Caco-2 (cell line): ENCODE measurements at regions of chr11 and their contacts with region 1.

Region 1: GRCh38 chr11:92269021-92269420 is 44.4 kb downstream of the FAT3 start:
- DNase-seq: peak; percentile 62 to 67
- H3K4me3 ChIP-seq: no peak overlapping the region
- H3K4me3 Mint-ChIP-seq: no peak overlapping the region
- H3K27ac Mint-ChIP-seq: peak overlapping the region; percentile 70
- H3K4me1 ChIP-seq: peaks cover 43% of the 10 kb centered on the region
- H3K4me1 Mint-ChIP-seq: peaks cover 63% of the 10 kb centered on the region
- H3K27me3 ChIP-seq: no peaks in the 10 kb centered on the region
- H3K27me3 Mint-ChIP-seq: no peaks in the 10 kb centered on the region
- CTCF ChIP-seq: no peak

Region 2: DNA sequence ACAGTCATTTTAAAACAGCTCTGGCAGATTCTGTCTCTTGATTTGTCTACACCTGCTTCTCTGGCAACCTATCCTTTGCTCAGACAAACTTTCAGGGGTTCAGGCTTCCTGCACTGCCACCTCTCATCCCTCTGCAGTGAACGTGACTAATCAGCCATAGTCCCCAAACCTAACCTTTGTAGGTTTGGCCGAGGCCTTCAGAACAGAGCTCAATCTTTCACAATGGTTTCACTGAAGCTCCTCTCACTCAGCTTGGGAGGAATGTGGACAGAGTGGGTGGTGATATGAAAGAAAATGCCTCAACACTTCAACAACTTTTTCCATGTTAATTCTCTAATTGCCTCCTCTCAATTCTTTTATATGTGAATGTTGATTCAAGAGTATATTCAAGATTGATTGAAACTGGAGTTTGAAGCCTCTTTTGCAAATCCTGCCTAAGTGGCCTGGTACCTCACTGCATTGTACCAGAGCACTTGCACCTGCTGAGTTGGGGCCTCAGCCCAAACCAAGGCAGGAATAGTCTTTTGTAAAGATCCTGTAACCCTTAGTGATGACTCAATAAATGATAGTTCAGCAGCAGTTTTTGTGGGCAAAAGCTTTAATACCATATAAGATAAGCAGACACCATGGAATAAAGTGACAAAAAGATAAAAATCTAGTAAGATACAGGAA is 78.3 kb before region 1 on chr11:
- CTCF ChIA-PET with region 1: no interaction called
- POLR2A ChIA-PET with region 1: no interaction called
- intact Hi-C with region 1: no loop called
- DNase-seq: no peak
- H3K4me3 ChIP-seq: no peak overlapping the region
- H3K4me3 Mint-ChIP-seq: no peak overlapping the region
- H3K27ac Mint-ChIP-seq: no peak overlapping the region
- H3K4me1 ChIP-seq: no peaks in the 10 kb centered on the region
- H3K4me1 Mint-ChIP-seq: no peaks in the 10 kb centered on the region
- H3K27me3 ChIP-seq: no peaks in the 10 kb centered on the region
- H3K27me3 Mint-ChIP-seq: peaks cover 3% of the 10 kb centered on the region
- CTCF ChIP-seq: no peak

Region 3: DNA sequence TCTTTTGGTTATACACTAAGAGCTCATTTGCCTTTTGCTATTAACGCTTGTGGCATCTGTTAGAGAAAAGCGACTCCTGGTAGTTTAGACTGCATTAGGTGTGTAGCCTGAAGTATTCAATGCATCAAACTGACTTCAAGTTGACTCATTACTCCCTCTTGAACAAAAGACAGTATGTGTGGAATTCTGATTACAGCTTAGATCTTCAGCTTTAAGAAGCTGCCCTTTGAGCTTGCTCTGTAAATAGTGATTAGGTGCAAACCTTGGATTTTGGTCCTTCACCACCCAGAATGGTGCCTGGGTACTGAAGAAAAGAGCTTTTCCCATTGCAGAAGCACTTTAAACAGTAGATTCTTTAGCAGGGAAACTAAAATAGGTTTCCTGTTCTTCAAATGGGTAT is 17.7 kb after region 1 on chr11:
- CTCF ChIA-PET with region 1: interaction called, 12 read pairs
- POLR2A ChIA-PET with region 1: interaction called, 17 read pairs
- intact Hi-C with region 1: loop called (anchors 1 kb)
- DNase-seq: peak; percentile 51 to 69
- H3K4me3 ChIP-seq: no peak overlapping the region
- H3K4me3 Mint-ChIP-seq: peak overlapping the region; percentile 50
- H3K27ac Mint-ChIP-seq: peak overlapping the region; percentile 80
- H3K4me1 ChIP-seq: peaks cover 61% of the 10 kb centered on the region
- H3K4me1 Mint-ChIP-seq: peaks cover 68% of the 10 kb centered on the region
- H3K27me3 ChIP-seq: no peaks in the 10 kb centered on the region
- H3K27me3 Mint-ChIP-seq: no peaks in the 10 kb centered on the region
- CTCF ChIP-seq: no peak

Region 4: GRCh38 chr11:92329646-92330045 is 60.6 kb after region 1 on chr11:
- CTCF ChIA-PET with region 1: no interaction called
- POLR2A ChIA-PET with region 1: interaction called, 7 read pairs
- intact Hi-C with region 1: loop called (anchors 5 kb)
- DNase-seq: peak in 1 of 2 experiments; percentile 14
- H3K4me3 ChIP-seq: no peak overlapping the region
- H3K4me3 Mint-ChIP-seq: no peak overlapping the region
- H3K27ac Mint-ChIP-seq: peak overlapping the region; percentile 23
- H3K4me1 ChIP-seq: peaks cover 29% of the 10 kb centered on the region
- H3K4me1 Mint-ChIP-seq: peaks cover 40% of the 10 kb centered on the region
- H3K27me3 ChIP-seq: no peaks in the 10 kb centered on the region
- H3K27me3 Mint-ChIP-seq: no peaks in the 10 kb centered on the region
- CTCF ChIP-seq: no peak

Region 5: DNA sequence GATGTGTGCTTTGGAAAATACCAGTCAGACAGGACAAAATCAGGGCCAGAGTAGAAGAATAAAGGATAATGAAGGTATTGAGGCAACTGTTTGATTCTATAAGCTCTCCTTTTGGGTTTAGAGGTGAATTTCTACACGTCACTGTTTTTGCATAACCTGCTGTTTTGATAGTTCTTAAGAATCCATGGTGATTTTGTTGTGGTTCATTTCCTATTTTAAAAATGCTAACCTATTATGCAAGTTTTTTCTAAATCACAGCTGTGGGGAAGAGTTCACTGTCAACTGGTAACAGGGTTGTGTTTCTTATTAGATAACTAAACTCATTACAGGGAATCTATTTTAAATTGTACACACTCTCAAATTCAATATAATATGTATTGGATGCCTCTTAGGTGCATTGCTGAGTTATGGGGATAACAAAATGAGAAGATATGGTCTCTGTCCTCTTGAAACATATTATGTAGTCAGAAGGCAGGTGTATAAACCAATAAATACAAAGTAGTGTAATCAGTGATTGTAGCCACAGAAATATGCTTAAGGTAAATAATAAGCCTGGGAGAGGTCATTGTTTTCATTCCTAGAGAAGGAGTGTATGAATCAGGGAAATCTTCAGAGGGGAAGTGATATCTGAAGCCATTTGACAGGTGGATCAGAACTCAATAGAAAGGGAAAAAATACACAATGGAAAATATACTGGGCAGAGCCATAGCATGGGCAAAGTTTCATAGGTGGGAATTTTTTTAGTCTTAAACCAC is 148.1 kb after region 1 on chr11:
- CTCF ChIA-PET with region 1: no interaction called
- POLR2A ChIA-PET with region 1: no interaction called
- intact Hi-C with region 1: loop called (anchors 1 kb)
- DNase-seq: peak in 1 of 2 experiments; percentile 35
- H3K4me3 ChIP-seq: no peak overlapping the region
- H3K4me3 Mint-ChIP-seq: no peak overlapping the region
- H3K27ac Mint-ChIP-seq: peak overlapping the region; percentile 58
- H3K4me1 ChIP-seq: peaks cover 14% of the 10 kb centered on the region
- H3K4me1 Mint-ChIP-seq: peaks cover 18% of the 10 kb centered on the region
- H3K27me3 ChIP-seq: no peaks in the 10 kb centered on the region
- H3K27me3 Mint-ChIP-seq: no peaks in the 10 kb centered on the region
- CTCF ChIP-seq: no peak